Right ventricle myocardium inferior (tissue), 1 donor: ENCODE measurements at regions of chr5 and their contacts with region 1.

Region 1: DNA sequence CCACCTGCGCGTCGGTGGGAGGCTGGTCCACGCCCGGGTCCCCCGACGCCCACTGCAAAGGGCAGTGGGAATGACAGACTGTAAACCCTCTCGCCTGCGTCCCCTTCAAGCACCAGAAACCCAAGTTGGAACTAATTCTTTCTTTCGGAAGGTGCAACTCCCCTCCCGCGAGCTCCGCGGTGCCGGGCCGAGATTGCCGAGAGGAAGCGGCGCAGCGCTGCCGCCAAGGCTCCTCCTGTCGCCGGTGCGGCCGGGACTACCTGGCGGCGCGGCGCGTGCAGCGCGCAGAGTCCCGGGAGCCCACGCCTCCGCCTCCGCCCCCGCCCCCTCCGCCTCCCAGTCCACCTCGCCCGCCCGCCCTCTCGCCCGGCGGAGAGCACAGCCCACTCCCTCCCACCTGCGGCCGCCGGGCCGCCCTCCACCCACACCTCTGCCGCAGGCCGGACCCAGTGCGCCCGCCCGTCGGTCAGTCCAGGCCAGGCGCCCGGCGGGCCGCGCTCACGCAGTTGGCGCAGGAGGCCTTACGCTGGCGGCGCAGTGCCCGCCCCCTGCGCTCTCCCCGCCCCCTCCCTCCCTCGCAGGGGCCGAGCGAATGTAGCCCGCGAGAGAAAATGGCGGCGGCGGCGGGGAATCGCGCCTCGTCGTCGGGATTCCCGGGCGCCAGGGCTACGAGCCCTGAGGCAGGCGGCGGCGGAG is at the start of gene MAP3K1:
- DNase-seq: peak; percentile 93
- ATAC-seq: peak; percentile 92
- total RNA-seq, gene MAP3K1: 6.3 TPM

Region 2: DNA sequence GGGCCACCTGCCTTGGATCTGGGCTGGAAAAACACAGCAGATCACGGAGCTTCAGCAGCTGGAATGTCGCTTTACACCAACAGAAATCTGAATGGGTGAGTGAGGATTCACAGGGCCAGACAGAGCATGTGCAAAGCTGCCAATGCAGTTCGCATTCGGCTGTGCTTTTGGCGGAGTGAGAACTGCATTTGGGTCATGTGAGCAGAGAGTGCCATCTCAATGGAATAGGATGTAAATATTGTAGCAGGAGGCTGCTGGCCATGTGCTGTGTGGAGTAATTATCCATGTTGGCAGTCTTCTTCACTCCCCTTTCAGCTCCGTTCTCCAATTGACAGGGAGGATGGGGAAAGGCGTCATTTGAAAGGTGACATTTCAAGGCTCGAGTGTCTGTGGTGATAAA is 581.9 kb before region 1 on chr5 and contains the start of gene ANKRD55:
- intact Hi-C with region 1: no loop called
- DNase-seq: no peak
- ATAC-seq: no peak
- total RNA-seq, gene ANKRD55: not detected

Region 3: GRCh38 chr5:56279979-56280378 is 535.1 kb before region 1 on chr5:
- intact Hi-C with region 1: loop called (anchors 5 kb)
- DNase-seq: no peak
- ATAC-seq: no peak

Region 4: GRCh38 chr5:56481428-56482357 is 333.4 kb before region 1 on chr5:
- intact Hi-C with region 1: loop called (anchors 2 kb)
- DNase-seq: peak; percentile 77
- ATAC-seq: peak; percentile 55

Region 5: DNA sequence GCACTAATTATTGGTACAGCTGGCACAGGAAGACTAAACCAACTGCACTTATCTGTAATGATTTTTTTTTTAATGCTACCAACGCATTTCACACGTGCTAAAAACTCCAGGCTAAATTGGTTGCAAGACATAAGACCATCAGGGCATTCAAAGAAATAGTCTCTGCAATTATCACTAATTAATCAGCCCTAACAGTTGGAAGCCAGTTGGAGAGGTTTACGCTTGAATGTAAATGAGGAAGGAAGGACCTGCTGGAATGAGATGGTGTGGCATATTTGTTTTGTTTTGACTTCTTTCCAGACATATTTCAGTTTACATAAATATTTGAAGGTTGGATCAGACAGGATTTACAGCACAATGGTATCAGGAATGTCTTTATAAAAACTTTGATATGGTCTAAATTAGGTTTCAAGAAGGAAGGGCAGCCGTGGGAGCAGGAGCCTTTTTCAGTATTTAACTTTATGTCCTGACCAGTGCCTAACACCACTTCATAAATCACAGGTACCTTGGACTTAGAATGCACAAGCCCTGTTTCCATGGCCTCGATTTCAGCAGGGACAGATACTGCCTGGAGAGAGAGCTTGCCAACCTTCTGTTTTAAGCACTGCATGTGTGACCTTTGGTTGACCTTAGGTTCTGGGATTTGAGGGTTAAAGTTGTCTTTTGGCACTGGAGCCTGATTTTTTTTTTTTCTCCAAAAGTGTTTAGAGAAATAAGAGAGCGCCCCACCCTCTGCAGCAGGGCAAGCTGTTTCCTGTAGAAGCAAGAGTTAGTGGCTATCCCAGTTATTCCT is 199.6 kb before region 1 on chr5:
- intact Hi-C with region 1: loop called (anchors 10 kb)
- DNase-seq: no peak
- ATAC-seq: peak; percentile 72

Region 6: DNA sequence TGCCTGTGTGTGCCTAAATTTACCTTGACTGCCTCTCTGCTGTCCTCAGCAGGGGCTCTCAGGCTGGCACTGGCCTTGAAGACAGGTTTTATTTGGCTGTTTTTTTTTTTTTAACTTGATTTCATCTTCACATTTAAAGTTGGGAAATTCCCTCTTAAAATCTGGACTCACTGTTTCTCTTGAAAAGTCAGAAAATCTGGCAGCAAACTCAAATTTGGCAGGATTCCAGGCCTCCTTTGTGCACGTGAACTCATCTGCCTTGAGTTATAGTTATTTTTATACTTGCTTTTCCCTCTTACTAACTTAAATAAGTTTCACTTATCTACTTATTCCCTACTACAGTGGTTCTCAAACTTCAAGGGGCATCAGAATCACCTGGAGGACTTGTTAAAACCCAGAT is 118.2 kb before region 1 on chr5:
- intact Hi-C with region 1: loop called (anchors 5 kb)
- DNase-seq: no peak
- ATAC-seq: no peak

Region 7: GRCh38 chr5:57662991-57663390 is 847.9 kb after region 1 on chr5:
- intact Hi-C with region 1: no loop called
- DNase-seq: no peak
- ATAC-seq: peak; percentile 88